ENCODE measurements at regions of chr16 and their contacts with region 1.

Region 1: GRCh38 chr16:85821441-85822135 is 22.1 kb downstream of the COX4I1 start:
- DNase-seq: no peak
- H3K4me3 ChIP-seq: no peak overlapping the region
- H3K27ac ChIP-seq: no peak overlapping the region
- H3K4me1 ChIP-seq: no peaks in the 10 kb centered on the region
- H3K27me3 ChIP-seq: no peaks in the 10 kb centered on the region
- CTCF ChIP-seq: peak; percentile 91 to 95 (median 95)
- POLR2A ChIP-seq: peak in 1 of 2 donors; percentile 6

Region 2: GRCh38 chr16:85583491-85584181 is 238.0 kb before region 1 on chr16:
- intact Hi-C with region 1: no loop called
- DNase-seq: no peak
- H3K4me3 ChIP-seq: no peak overlapping the region
- H3K27ac ChIP-seq: peak overlapping the region; percentile 50
- H3K4me1 ChIP-seq: peaks cover 56% of the 10 kb centered on the region
- H3K27me3 ChIP-seq: no peaks in the 10 kb centered on the region
- CTCF ChIP-seq: no peak
- POLR2A ChIP-seq: no peak

Region 3: DNA sequence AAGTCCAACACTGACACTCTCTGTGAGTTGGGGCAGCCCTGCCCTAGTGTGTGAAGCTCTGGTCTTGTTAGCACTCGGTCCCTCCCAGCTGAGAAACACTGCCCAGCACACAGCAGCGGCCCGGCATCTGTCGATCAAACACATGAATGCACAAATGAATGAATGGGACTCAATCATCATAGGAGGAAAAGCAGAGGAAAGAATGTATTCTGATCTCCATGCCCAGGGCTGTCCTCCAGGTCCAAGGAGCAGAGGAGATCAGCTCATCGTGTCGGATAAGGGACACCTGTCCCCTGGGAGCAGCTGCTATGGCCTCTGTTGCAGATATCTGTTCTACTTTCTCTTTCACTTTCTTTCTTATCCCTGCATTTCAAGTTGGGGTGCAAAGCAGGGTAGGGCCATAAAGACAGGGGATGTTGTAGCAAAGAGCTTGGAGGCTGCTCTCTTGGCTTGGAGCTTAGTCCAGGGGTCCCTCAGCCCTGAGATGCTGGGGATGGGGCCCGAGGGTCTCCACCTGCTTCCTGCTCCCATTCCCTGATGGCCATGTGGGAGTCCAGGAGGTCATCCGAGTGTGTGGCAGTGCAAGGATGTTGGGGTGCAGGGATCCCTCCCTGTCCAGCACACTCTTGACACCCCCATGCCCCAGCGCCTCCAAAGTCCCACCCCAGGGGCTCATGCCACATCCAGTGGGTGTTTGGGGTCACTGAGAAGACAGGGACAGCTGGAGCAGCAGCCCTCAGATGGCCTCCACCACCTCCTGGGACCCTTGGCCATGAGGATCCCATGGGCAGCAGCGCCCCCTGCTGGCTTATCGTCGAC is 165.6 kb after region 1 on chr16:
- intact Hi-C with region 1: loop called (anchors 2 kb)
- DNase-seq: no peak
- H3K4me3 ChIP-seq: no peak overlapping the region
- H3K27ac ChIP-seq: no peak overlapping the region
- H3K4me1 ChIP-seq: peaks cover 5% of the 10 kb centered on the region
- H3K27me3 ChIP-seq: no peaks in the 10 kb centered on the region
- CTCF ChIP-seq: peak in 1 of 3 experiments; percentile 9
- POLR2A ChIP-seq: no peak

Region 4: DNA sequence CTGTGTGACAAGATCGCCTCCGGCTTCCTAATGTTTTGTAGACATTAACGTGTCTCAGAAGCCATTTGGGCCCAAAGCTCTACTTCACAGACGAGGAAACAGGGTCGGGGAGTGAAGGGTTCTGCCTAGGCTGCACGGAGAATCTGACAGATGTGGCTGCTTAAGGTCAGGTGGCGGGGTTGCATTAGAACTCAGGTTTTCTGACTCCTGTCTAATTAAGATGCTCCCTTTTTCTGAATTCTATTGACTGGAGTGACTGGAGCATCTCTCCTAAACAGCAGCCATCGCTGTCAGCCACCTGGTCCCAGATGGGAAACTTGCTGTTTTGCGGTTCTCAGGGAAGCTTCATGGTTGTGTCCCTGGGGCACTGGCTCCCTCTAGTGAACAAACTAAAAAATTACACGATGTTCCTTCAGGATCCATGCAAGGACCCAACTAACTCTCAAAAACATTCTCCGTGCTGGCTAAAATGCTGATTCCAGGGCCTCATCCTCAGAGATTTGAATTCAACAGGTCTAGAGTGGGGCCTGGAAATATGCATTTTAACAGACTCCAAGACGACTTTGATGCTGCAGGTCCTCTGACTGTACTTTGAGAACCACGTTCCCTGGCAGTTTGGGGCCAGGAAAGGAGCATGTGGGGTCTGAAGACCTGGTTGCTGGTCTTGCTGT is 194.7 kb after region 1 on chr16:
- intact Hi-C with region 1: loop called (anchors 2 kb)
- DNase-seq: no peak
- H3K4me3 ChIP-seq: no peak overlapping the region
- H3K27ac ChIP-seq: no peak overlapping the region
- H3K4me1 ChIP-seq: no peaks in the 10 kb centered on the region
- H3K27me3 ChIP-seq: no peaks in the 10 kb centered on the region
- CTCF ChIP-seq: peak; percentile 54 to 68 (median 67)
- POLR2A ChIP-seq: no peak

Region 5: DNA sequence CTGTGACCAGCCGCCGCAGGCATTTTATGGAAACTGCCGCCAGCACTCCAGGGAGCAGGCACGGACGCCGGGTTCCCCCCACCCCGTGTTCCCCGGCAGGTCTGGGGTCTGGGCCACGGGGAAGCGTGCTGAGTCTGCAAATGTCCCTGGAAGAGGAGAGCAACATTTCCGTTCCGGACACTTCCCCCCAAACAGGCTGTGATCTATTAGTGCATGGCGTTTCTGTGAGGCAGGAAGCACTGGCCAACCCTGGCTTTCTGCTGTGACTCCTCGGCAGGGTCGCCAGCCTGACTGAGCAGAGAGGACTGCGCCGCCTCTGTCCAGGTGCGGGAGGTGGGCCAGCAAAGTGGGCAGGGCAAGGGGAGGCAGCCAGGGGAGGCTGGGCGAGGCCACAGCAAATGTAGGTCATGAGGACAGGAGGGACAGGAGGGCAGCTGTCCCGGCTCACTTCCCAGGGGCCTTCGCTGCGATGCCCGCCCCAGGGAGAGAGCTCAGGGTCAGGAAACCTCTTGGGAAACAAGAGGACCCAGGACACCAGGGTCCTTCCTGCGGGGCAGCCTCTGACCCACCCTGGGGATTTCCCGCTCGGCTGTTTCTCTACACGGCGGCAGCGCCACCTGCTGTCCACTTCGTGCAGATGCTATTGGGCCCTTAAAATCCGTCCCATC is 698.2 kb after region 1 on chr16:
- intact Hi-C with region 1: loop called (anchors 10 kb)
- DNase-seq: no peak
- H3K4me3 ChIP-seq: no peak overlapping the region
- H3K27ac ChIP-seq: no peak overlapping the region
- H3K4me1 ChIP-seq: peaks cover 29% of the 10 kb centered on the region
- H3K27me3 ChIP-seq: no peaks in the 10 kb centered on the region
- CTCF ChIP-seq: peak; percentile 81 to 90 (median 89)
- POLR2A ChIP-seq: no peak

Measured in vagina (tissue), 2 donors.